Activated T-helper 2 cell treated with anti-CD3 and anti-CD28 coated beads, Interferon-gamma antibody, Interleukin-2, Interleukin-4, amounts not matched to agents 10 μg/mL and 5 μg/mL and 100 μg/mL, durations not matched to agents 14 hours and 24 hours and 36 hours (primary cell): ENCODE measurements at regions of chr18 and their contacts with region 1.

Region 1: GRCh38 chr18:67217551-67218166 is 298.9 kb downstream of the DSEL start:
- DNase-seq: peak; percentile 22
- H3K4me3 Mint-ChIP-seq: no peak overlapping the region
- H3K27ac Mint-ChIP-seq: no peak overlapping the region
- H3K4me1 Mint-ChIP-seq: no peaks in the 10 kb centered on the region
- H3K27me3 Mint-ChIP-seq: no peaks in the 10 kb centered on the region

Region 2: DNA sequence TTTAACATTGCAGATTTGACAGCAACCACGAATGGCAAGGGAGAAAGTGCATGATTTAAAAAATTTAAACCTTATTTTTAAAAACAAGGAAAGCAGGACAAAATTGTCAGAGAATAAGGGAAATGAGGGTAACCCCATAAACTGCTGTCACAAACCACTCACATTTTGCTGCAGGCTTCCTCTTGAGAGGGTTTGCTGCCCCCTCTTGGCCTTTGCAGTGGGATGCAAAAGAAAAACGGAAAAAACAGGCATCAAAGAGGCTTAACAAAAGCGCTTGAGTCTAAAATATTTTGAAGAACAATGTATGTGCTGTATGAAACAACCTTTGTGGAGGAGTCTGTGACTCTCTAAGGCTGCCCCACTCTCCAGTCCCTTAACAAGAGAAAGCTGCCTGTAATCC is 1405.7 kb after region 1 on chr18:
- intact Hi-C with region 1: loop called (anchors 5 kb)
- DNase-seq: no peak
- H3K4me3 Mint-ChIP-seq: no peak overlapping the region
- H3K27ac Mint-ChIP-seq: no peak overlapping the region
- H3K4me1 Mint-ChIP-seq: no peaks in the 10 kb centered on the region
- H3K27me3 Mint-ChIP-seq: no peaks in the 10 kb centered on the region

Region 3: DNA sequence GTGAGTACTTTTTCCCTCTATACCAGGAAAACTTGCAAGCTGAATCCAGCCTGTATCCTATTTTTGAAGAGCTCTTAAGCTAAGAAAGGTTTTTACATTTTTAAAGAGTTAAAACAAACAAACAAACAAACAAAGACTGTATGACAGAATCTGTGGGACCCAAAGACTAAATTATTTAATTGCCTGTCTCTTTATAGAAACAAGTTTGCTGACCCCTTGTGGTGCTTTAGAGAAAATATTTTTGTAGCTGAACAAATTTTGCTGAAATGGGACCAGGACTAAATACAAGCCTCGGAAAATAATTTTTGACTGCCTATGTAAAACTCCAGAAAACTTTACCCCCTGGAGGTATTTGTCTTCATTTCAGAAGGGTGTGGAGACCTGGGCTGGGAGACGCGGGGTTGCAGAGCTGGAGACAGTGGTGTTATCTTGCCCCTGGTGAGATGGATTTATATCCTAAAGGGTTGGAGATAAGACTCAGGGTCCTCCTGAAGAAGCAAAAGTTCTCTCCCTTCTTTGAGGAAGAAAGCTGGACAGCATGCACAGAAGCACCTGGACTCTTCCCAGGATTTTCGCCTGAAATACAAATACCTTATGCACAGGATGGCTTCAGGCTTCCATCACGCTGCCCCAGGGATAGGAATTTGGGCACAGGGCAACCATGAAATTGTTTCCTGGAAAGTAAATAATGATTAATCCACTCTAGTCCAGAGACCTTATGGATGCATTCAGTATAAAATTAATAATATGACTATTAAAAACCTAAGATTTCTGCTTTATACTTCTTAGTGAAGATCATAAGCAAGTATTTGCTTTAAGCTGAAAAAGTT is 1442.9 kb after region 1 on chr18:
- intact Hi-C with region 1: loop called (anchors 2 kb)
- DNase-seq: no peak
- H3K4me3 Mint-ChIP-seq: no peak overlapping the region
- H3K27ac Mint-ChIP-seq: no peak overlapping the region
- H3K4me1 Mint-ChIP-seq: no peaks in the 10 kb centered on the region
- H3K27me3 Mint-ChIP-seq: peaks cover 6% of the 10 kb centered on the region